B cell (primary cell): ENCODE measurements at regions of chr22 and their contacts with region 1.

Region 1: GRCh38 chr22:25362215-25362882 is 142.9 kb downstream of the CRYBB2 start:
- DNase-seq: peak; percentile 71
- ATAC-seq: peak; percentile 69
- H3K4me3 ChIP-seq: no peak overlapping the region
- H3K4me3 Mint-ChIP-seq: no peak overlapping the region
- H3K27ac ChIP-seq: no peak overlapping the region
- H3K27ac Mint-ChIP-seq: no peak overlapping the region
- H3K4me1 ChIP-seq: peaks cover 0 to 7% of the 10 kb centered on the region in 2 donors
- H3K4me1 Mint-ChIP-seq: peaks cover 2% of the 10 kb centered on the region
- H3K27me3 ChIP-seq: no peaks in the 10 kb centered on the region
- H3K27me3 Mint-ChIP-seq: no peaks in the 10 kb centered on the region
- CTCF ChIP-seq: peak; percentile 92

Region 2: GRCh38 chr22:25013607-25014006 is 348.7 kb before region 1 on chr22:
- CTCF ChIA-PET with region 1: no interaction called
- POLR2A ChIA-PET with region 1: no interaction called
- intact Hi-C with region 1: no loop called
- DNase-seq: no peak
- ATAC-seq: no peak
- H3K4me3 ChIP-seq: no peak overlapping the region
- H3K4me3 Mint-ChIP-seq: no peak overlapping the region
- H3K27ac ChIP-seq: no peak overlapping the region
- H3K27ac Mint-ChIP-seq: no peak overlapping the region
- H3K4me1 ChIP-seq: no peaks in the 10 kb centered on the region
- H3K4me1 Mint-ChIP-seq: no peaks in the 10 kb centered on the region
- H3K27me3 ChIP-seq: no peaks in the 10 kb centered on the region
- H3K27me3 Mint-ChIP-seq: peaks cover 14% of the 10 kb centered on the region
- CTCF ChIP-seq: no peak

Region 3: DNA sequence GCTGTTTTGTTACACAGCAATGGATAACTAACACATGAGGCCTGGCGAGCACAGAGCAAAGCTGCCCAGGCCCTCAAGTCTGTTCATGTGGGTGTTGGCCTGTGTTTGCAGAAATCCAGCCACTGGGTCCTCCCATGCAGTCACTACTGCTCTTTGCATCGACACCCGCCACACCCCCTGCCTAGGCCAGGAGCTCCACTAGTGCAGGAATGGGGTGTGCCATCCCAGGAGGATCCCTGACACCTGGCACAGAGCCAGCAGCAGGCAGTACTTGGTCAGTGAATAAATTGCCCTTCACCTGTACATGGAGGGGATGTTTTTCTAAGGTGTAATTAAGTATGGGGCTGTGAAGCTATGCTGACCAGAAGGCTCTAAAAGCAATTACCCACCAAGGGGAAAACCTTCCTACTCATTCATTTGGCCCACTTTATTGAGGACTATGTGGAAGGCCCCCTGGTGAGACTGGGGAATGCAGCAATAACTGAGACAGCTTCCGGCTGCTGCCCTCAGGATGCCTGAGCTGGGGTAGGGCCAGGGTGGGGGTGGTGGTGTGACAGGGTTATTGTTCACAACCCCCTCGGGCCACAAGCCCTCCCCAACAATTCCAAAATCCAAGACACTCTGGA is 17.9 kb after region 1 on chr22:
- CTCF ChIA-PET with region 1: interaction called, 12 read pairs
- POLR2A ChIA-PET with region 1: no interaction called
- intact Hi-C with region 1: no loop called
- DNase-seq: no peak
- ATAC-seq: no peak
- H3K4me3 ChIP-seq: no peak overlapping the region
- H3K4me3 Mint-ChIP-seq: no peak overlapping the region
- H3K27ac ChIP-seq: no peak overlapping the region
- H3K27ac Mint-ChIP-seq: no peak overlapping the region
- H3K4me1 ChIP-seq: no peaks in the 10 kb centered on the region
- H3K4me1 Mint-ChIP-seq: peaks cover 4% of the 10 kb centered on the region
- H3K27me3 ChIP-seq: no peaks in the 10 kb centered on the region
- H3K27me3 Mint-ChIP-seq: no peaks in the 10 kb centered on the region
- CTCF ChIP-seq: no peak

Region 4: GRCh38 chr22:25419237-25420113 is 57.1 kb after region 1 on chr22:
- CTCF ChIA-PET with region 1: interaction called, 3 read pairs
- POLR2A ChIA-PET with region 1: no interaction called
- intact Hi-C with region 1: loop called (anchors 2 kb)
- DNase-seq: peak; percentile 65
- ATAC-seq: peak; percentile 49
- H3K4me3 ChIP-seq: peak overlapping the region; percentile 19 to 68 (median 43)
- H3K4me3 Mint-ChIP-seq: peak overlapping the region; percentile 81
- H3K27ac ChIP-seq: no peak overlapping the region
- H3K27ac Mint-ChIP-seq: peak overlapping the region; percentile 12
- H3K4me1 ChIP-seq: peaks cover 38 to 40% of the 10 kb centered on the region in 2 donors
- H3K4me1 Mint-ChIP-seq: peaks cover 34% of the 10 kb centered on the region
- H3K27me3 ChIP-seq: peaks cover 0 to 45% (median 21%) of the 10 kb centered on the region in 4 experiments
- H3K27me3 Mint-ChIP-seq: peaks cover 40% of the 10 kb centered on the region
- CTCF ChIP-seq: no peak

Region 5: DNA sequence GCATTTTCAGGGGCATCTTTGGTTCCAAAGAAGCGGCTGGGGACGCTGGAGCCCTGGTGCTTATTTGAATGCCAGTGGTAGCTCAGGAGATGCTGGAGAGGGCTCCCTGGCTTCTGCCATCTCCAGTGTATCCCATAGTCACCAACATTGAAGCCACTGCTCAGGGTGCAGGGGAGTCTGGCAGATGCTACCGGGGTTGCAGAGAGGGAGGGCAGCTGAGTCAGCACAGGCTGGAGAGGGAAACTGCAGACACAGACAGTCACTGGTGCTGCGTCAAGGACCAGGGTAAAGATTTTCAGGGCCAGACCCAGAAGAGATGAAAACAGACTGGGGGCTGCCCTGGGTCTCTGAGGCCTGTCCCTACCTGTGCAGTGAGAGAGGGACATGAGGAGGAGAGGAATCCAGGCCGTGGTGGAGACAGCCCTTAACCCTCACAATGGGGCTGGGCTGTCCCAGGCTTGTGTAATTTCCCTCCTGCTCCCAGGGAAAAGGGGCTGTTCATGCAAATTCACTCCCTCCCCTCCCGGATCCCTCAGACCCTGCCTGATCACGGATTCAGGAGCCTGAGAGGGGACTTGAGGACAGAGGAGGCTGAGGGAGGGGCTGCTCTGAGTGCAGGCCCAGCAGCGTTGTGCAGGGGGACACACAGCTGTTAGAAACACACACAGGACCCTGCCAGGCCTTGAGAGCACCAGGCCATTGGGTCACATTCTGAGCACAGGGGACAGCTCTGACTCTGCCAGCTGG is 75.2 kb after region 1 on chr22:
- CTCF ChIA-PET with region 1: no interaction called
- POLR2A ChIA-PET with region 1: no interaction called
- intact Hi-C with region 1: no loop called
- DNase-seq: no peak
- ATAC-seq: no peak
- H3K4me3 ChIP-seq: no peak overlapping the region
- H3K4me3 Mint-ChIP-seq: no peak overlapping the region
- H3K27ac ChIP-seq: no peak overlapping the region
- H3K27ac Mint-ChIP-seq: no peak overlapping the region
- H3K4me1 ChIP-seq: no peaks in the 10 kb centered on the region
- H3K4me1 Mint-ChIP-seq: no peaks in the 10 kb centered on the region
- H3K27me3 ChIP-seq: no peaks in the 10 kb centered on the region
- H3K27me3 Mint-ChIP-seq: peaks cover 3% of the 10 kb centered on the region
- CTCF ChIP-seq: no peak

Region 6: DNA sequence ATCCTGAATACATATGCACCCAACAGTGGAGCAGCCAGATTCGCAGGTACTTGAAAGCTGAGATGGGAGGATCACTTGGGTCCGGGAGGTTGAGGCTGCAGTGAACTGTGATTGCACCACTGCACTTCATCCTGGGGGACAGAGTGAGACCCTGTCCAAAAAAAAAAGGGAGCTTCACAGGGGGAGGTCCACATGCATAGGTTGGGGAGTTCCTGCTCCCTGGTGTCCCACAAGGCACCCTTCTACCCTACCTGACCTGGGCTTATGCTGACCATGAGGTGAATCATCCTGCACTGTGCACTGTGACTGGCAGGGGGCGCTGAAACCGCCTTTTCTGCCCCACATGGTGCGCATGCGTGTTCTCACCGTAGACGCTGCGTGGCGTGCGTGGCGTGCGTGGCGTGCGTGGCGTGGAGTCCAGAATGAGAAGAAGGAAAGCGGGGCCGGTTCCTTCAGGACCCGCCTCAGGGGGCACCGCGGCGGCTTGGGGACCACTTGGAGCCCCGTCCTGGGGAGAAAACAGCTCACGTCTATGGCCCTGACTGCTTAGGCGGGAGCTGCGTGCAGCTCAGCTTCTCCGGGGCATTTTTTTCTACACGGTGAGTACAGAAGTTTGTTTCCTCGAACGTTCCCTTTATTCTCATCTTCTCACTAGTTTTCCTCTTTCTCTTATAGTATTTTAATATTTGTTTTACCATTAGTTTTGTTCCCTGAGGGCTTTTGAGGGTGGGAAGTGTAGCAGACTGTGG is 85.5 kb after region 1 on chr22:
- CTCF ChIA-PET with region 1: interaction called, 4 read pairs
- POLR2A ChIA-PET with region 1: no interaction called
- intact Hi-C with region 1: loop called (anchors 2 kb)
- DNase-seq: peak; percentile 93
- ATAC-seq: peak; percentile 97
- H3K4me3 ChIP-seq: peak overlapping the region; percentile 72 to 95 (median 84)
- H3K4me3 Mint-ChIP-seq: peak overlapping the region; percentile 95
- H3K27ac ChIP-seq: peak overlapping the region in 1 of 2 donors; percentile 79
- H3K27ac Mint-ChIP-seq: peak overlapping the region; percentile 99
- H3K4me1 ChIP-seq: peaks cover 9 to 14% of the 10 kb centered on the region in 2 donors
- H3K4me1 Mint-ChIP-seq: peaks cover 38% of the 10 kb centered on the region
- H3K27me3 ChIP-seq: no peaks in the 10 kb centered on the region
- H3K27me3 Mint-ChIP-seq: no peaks in the 10 kb centered on the region
- CTCF ChIP-seq: peak; percentile 86

Region 7: DNA sequence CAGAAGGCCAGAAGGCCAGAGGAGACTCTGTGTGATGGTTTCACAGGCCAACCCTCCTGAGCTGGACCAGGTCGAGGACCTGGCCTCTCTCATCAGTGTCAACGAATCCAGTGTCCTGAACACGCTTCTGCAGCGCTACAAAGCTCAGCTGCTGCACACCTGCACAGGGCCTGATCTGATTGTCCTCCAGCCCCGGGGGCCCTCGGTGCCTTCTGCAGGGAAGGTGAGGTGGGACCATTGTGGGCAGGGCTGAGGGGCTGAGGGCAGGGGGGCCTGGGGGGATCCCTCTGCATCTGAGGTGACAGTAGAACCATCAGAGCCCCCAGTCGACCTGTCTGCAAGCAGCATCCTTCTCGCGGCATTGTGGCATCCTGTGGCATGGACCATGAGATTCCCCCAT is 409.9 kb after region 1 on chr22:
- CTCF ChIA-PET with region 1: no interaction called
- POLR2A ChIA-PET with region 1: no interaction called
- intact Hi-C with region 1: loop called (anchors 2 kb)
- DNase-seq: no peak
- ATAC-seq: no peak
- H3K4me3 ChIP-seq: no peak overlapping the region
- H3K4me3 Mint-ChIP-seq: no peak overlapping the region
- H3K27ac ChIP-seq: no peak overlapping the region
- H3K27ac Mint-ChIP-seq: no peak overlapping the region
- H3K4me1 ChIP-seq: peaks cover 3 to 7% of the 10 kb centered on the region in 2 donors
- H3K4me1 Mint-ChIP-seq: peaks cover 9% of the 10 kb centered on the region
- H3K27me3 ChIP-seq: no peaks in the 10 kb centered on the region
- H3K27me3 Mint-ChIP-seq: peaks cover 4% of the 10 kb centered on the region
- CTCF ChIP-seq: no peak